ENCODE measurements at regions of chr1 and their contacts with region 1.

Region 1: GRCh38 chr1:23634842-23635651 is 56.6 kb upstream of the RPL11 start:
- DNase-seq: peak; percentile 75
- H3K4me3 Mint-ChIP-seq: peak overlapping the region; percentile 72
- H3K27ac Mint-ChIP-seq: peak overlapping the region; percentile 86
- H3K4me1 Mint-ChIP-seq: peaks cover 14% of the 10 kb centered on the region
- H3K27me3 Mint-ChIP-seq: no peaks in the 10 kb centered on the region
- CTCF ChIP-seq: peak; percentile 71

Region 2: GRCh38 chr1:22976461-22977243 is 658.4 kb before region 1 on chr1:
- CTCF ChIA-PET with region 1: no interaction called
- POLR2A ChIA-PET with region 1: no interaction called
- intact Hi-C with region 1: loop called (anchors 5 kb)
- DNase-seq: peak; percentile 88
- H3K4me3 Mint-ChIP-seq: no peak overlapping the region
- H3K27ac Mint-ChIP-seq: no peak overlapping the region
- H3K4me1 Mint-ChIP-seq: peaks cover 30% of the 10 kb centered on the region
- H3K27me3 Mint-ChIP-seq: no peaks in the 10 kb centered on the region
- CTCF ChIP-seq: peak; percentile 92

Region 3: DNA sequence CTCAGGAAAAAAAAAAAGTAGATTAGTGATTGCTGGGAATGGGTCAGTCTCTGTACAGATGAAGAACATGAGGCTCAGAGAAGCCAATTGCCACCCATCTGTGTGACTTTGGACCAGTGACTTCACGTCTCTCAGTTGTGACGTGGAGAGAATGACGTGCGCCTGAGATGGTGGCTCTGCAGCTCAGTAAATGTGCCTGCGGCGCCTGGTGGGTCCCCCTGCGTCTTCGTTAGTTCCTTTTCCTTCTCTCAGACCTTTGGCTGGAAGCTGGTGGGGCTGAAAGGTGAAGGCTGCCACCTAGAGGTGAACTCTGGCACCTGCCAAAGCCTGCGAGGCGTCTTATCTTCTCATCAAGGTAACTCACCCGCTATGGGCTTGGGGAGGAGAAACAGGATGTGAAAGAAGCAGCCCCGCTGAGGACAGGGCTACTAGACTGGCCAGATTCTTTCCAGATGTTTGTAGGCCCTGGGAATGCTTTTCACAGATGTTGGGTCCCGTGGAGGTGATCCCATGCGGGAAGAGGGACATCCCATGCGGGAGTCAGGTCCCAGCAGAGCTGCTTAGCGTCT is 95.3 kb before region 1 on chr1:
- CTCF ChIA-PET with region 1: interaction called, 472 read pairs
- POLR2A ChIA-PET with region 1: interaction called, 23 read pairs
- intact Hi-C with region 1: loop called (anchors 1 kb)
- DNase-seq: peak; percentile 90
- H3K4me3 Mint-ChIP-seq: no peak overlapping the region
- H3K27ac Mint-ChIP-seq: no peak overlapping the region
- H3K4me1 Mint-ChIP-seq: peaks cover 18% of the 10 kb centered on the region
- H3K27me3 Mint-ChIP-seq: no peaks in the 10 kb centered on the region
- CTCF ChIP-seq: peak; percentile 91

Region 4: GRCh38 chr1:23559136-23559984 is 75.7 kb before region 1 on chr1 and contains the start of gene ID3:
- CTCF ChIA-PET with region 1: interaction called, 472 read pairs
- POLR2A ChIA-PET with region 1: interaction called, 131 read pairs
- intact Hi-C with region 1: loop called (anchors 1 kb)
- DNase-seq: peak; percentile 96
- H3K4me3 Mint-ChIP-seq: peak within 1 kb of the TSS; percentile 94
- H3K27ac Mint-ChIP-seq: peak within 1 kb of the TSS; percentile 90
- H3K4me1 Mint-ChIP-seq: peaks cover 49% of the 10 kb centered on the region
- H3K27me3 Mint-ChIP-seq: no peaks in the 10 kb centered on the region
- CTCF ChIP-seq: no peak
- total RNA-seq, gene ID3: 15.7 and 34.8 TPM in 2 replicates

Region 5: GRCh38 chr1:23591460-23592208 is 43.4 kb before region 1 on chr1:
- CTCF ChIA-PET with region 1: interaction called, 16 read pairs
- POLR2A ChIA-PET with region 1: interaction called, 13 read pairs
- intact Hi-C with region 1: loop called (anchors 5 kb)
- DNase-seq: no peak
- H3K4me3 Mint-ChIP-seq: no peak overlapping the region
- H3K27ac Mint-ChIP-seq: peak overlapping the region; percentile 94
- H3K4me1 Mint-ChIP-seq: peaks cover 74% of the 10 kb centered on the region
- H3K27me3 Mint-ChIP-seq: no peaks in the 10 kb centered on the region
- CTCF ChIP-seq: no peak

Region 6: DNA sequence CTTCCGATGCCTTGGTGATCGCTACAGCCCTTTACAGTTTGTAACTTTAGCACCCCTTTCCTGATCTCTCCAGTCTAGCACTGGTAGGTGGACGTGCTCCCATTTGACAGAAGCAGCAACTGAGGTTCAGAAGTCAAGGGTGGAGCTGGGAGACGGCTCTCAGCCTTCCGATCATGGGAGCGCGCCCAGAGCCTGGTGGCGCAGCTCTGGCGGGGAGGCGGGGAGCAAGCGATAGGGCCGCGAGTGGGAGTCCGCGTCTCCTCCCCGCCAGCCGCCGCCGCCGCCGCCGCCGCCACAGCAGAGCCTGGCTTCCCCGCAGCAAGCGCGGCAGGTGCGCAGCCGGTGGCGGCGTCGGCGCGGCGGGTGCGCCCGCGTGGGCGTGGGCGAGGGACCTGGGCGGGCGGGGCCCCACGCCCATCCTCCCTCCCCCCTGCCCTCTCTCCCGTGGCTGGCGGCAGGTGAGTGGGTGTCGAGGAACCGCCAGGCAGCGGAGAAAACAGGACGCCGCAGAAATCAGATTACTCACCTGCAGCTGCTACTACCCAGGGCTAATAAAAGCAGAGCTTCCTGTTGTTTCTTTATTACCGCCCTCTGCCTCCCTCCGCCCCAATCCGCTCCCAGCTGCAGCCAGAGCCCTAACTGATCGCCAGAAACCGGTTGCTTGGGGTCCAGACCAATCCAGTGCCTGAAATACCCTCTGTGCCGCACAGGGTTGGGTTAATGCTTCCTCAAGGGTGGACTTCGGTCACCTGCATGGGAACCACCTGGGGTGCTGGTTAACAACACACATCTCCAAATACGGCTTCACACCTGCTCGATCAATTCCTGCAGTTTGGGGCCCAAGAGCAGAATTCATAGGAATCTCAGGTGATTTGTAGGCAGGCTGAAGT is 15.5 kb before region 1 on chr1:
- CTCF ChIA-PET with region 1: interaction called, 29 read pairs
- POLR2A ChIA-PET with region 1: interaction called, 5 read pairs
- intact Hi-C with region 1: no loop called
- DNase-seq: peak; percentile 42
- H3K4me3 Mint-ChIP-seq: peak overlapping the region; percentile 53
- H3K27ac Mint-ChIP-seq: no peak overlapping the region
- H3K4me1 Mint-ChIP-seq: peaks cover 6% of the 10 kb centered on the region
- H3K27me3 Mint-ChIP-seq: no peaks in the 10 kb centered on the region
- CTCF ChIP-seq: no peak